Right lobe of liver (tissue), 6 donors: ENCODE measurements at regions of chr9 and their contacts with region 1.

Region 1: DNA sequence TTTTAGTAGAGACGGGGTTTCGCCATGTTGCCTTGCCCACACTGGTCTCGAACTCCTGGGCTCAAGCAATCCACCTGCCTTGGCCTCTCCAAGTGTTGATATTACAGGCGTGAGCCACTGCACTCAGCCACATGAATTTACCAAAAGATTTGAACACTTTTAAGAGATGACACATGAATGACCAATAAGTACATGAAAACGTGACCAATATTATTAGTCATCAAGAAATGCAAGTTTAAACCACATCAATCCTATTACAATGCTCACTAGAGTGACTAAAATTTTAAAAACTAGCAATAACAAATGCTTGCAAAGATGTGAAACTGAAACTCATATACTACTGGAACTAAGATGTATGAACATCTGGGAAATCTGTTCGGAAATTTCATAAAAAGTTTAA is 54.3 kb downstream of the NR6A1 start:
- DNase-seq: no peak
- ATAC-seq: no peak
- H3K4me3 ChIP-seq: no peak overlapping the region
- H3K27ac ChIP-seq: no peak overlapping the region
- H3K4me1 ChIP-seq: peaks cover 0 to 17% (median 8%) of the 10 kb centered on the region in 4 donors
- H3K27me3 ChIP-seq: no peaks in the 10 kb centered on the region
- CTCF ChIP-seq: no peak
- POLR2A ChIP-seq: no peak

Region 2: GRCh38 chr9:124617471-124618141 is 99.2 kb before region 1 on chr9:
- intact Hi-C with region 1: loop called in 1 of 2 experiments (anchors 10 kb)
- DNase-seq: peak; percentile 77 to 82 (median 79)
- ATAC-seq: peak; percentile 95 to 99 (median 97)
- H3K4me3 ChIP-seq: no peak overlapping the region
- H3K27ac ChIP-seq: no peak overlapping the region
- H3K4me1 ChIP-seq: peaks cover 0 to 14% (median 1%) of the 10 kb centered on the region in 4 donors
- H3K27me3 ChIP-seq: no peaks in the 10 kb centered on the region
- CTCF ChIP-seq: peak; percentile 85 to 92 (median 92)
- POLR2A ChIP-seq: no peak

Region 3: GRCh38 chr9:124652203-124652992 is 64.4 kb before region 1 on chr9:
- intact Hi-C with region 1: no loop called
- DNase-seq: no peak
- ATAC-seq: no peak
- H3K4me3 ChIP-seq: no peak overlapping the region
- H3K27ac ChIP-seq: no peak overlapping the region
- H3K4me1 ChIP-seq: no peaks in the 10 kb centered on the region
- H3K27me3 ChIP-seq: no peaks in the 10 kb centered on the region
- CTCF ChIP-seq: no peak
- POLR2A ChIP-seq: no peak

Region 4: DNA sequence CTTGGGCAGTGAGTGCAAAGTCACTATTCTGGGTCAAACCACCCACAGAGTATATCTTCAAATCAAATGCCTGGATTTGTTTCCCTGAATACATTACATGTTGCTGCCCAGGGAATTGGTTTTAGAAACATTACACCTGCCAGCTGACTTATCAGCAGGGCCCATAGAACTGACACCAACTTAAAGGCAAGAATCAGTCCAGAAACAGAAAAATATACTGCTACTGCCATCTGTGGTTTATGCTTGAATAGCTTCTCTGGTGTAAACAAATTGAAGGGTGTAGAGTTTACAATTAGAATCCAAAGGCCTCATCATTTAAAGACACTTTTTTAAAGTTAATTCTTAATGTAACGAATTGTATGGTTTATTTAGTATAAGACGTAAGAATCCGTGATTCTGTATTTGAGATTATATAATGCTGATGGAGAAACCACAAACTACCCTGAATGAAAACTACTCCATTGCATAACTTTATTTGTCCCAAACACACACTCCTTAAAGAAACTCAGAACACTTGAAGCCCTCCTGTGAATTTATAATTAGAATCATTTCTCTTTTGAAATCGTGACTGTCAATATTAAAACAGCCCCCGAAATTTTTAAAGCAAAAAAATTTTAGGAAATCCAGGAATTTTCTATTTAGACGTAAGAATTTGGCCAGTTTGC is 48.1 kb after region 1 on chr9:
- intact Hi-C with region 1: loop called in 1 of 2 experiments (anchors 10 kb)
- DNase-seq: no peak
- ATAC-seq: peak; percentile 45 to 75 (median 55)
- H3K4me3 ChIP-seq: no peak overlapping the region
- H3K27ac ChIP-seq: no peak overlapping the region
- H3K4me1 ChIP-seq: peaks cover 0 to 26% (median 5%) of the 10 kb centered on the region in 4 donors
- H3K27me3 ChIP-seq: no peaks in the 10 kb centered on the region
- CTCF ChIP-seq: peak; percentile 25 to 45 (median 43)
- POLR2A ChIP-seq: no peak

Region 5: GRCh38 chr9:125214186-125214585 is 497.4 kb after region 1 on chr9:
- intact Hi-C with region 1: no loop called
- DNase-seq: no peak
- ATAC-seq: peak in 2 of 4 donors; percentile 35 to 74
- H3K4me3 ChIP-seq: no peak overlapping the region
- H3K27ac ChIP-seq: no peak overlapping the region
- H3K4me1 ChIP-seq: peaks cover 0 to 13% (median 0%) of the 10 kb centered on the region in 4 donors
- H3K27me3 ChIP-seq: no peaks in the 10 kb centered on the region
- CTCF ChIP-seq: no peak
- POLR2A ChIP-seq: no peak